ENCODE measurements at regions of chr13 and their contacts with region 1.

Region 1: GRCh38 chr13:99176309-99177276 is 24.1 kb upstream of the UBAC2 start:
- DNase-seq: no peak
- H3K4me3 ChIP-seq: no peak overlapping the region
- CTCF ChIP-seq: peak; percentile 88

Region 2: GRCh38 chr13:99151516-99151915 is 25.1 kb before region 1 on chr13:
- CTCF ChIA-PET with region 1: interaction called, 12 read pairs
- POLR2A ChIA-PET with region 1: no interaction called
- DNase-seq: no peak
- H3K4me3 ChIP-seq: no peak overlapping the region
- CTCF ChIP-seq: no peak

Region 3: GRCh38 chr13:99158846-99159245 is 17.7 kb before region 1 on chr13:
- CTCF ChIA-PET with region 1: interaction called, 19 read pairs
- POLR2A ChIA-PET with region 1: no interaction called
- DNase-seq: no peak
- H3K4me3 ChIP-seq: no peak overlapping the region
- CTCF ChIP-seq: no peak

Region 4: DNA sequence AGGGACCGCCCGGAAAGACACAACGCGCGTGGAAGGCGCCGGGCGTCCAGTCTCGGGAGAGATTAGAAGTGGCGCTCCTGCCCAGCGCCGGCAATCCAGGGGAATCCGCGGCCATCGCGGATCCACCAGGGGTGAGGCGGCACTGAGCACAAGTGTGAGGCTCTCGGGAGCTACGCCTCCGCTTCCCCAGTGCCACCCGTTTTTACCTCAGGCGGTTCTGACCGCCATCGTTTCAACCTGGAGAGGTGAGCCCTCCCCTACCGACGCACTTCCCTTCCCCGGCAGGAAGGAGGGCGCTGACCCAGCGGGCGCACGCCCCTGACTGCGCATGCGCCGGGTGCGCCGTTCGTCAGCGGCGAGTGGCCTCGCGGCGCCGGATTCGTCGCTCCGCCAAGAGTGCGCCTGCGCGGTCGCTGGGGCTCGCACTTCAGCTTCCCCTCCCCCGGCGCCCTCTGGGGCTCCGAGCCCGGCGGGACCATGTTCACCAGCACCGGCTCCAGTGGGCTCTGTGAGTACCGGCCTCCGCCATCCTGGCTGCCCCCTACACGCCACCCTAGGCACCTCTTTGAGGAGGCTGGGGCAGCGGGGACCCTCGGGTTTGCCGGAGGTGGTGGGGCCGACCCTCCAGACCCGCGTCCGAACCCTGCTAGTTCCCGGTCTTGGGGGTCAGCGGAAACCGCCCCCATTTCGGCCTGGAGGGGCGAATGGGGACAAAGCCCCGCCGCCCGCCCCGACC is 24.0 kb after region 1 on chr13 and contains the start of gene UBAC2:
- CTCF ChIA-PET with region 1: interaction called, 29 read pairs
- POLR2A ChIA-PET with region 1: no interaction called
- DNase-seq: peak; percentile 45
- H3K4me3 ChIP-seq: peak within 1 kb of the TSS; percentile 98
- CTCF ChIP-seq: no peak

Region 5: DNA sequence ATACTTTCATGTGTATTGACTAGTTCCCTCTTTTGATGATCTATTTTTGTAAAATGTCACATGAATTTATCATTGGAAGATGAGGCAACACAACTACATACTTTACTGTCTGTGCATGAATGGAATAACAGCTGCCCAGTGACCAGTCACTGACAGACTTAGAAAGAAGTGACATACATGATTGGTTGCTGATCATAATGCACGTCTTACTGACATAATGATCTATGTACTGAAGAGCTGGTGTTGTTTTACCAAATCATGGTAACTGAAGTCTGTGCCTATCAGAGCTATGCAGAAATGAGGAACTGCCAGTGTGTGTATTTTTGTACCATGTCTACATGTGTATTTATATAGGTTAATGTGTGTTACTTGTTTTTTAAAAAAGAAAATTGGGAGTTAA is 55.1 kb after region 1 on chr13:
- CTCF ChIA-PET with region 1: interaction called, 11 read pairs
- POLR2A ChIA-PET with region 1: no interaction called
- DNase-seq: no peak
- H3K4me3 ChIP-seq: no peak overlapping the region
- CTCF ChIP-seq: no peak

Region 6: DNA sequence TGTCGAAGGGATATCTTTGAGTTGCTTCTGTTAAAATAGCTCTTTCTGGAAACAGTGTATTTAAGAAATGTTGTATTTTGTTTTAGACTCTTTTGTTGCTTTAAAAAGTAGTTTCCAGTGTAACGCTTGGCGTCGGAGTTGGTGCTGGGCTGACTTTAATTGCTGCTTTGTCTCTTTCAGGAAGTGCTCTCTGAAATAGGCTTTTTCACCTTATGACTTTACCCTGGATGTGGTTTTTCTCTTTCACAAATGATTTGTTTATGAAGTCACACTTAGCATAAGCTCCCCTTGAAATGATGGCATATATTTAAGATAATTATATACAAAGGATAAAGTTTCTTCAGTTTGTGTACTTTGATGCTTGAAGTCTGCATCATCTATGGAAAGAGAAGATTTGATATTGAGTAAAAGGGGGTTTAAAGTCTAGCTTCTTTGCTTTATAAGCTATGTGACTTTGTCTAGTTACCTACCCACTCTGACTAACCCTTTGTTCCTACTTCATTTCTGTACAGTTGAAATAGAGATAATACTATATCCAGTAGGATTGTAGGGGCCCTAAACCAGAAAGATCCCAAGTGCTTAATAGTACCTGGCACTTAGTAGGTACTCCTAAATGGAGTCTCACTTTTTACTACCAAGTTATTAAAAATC is 81.7 kb after region 1 on chr13 and contains the start of gene GPR18:
- CTCF ChIA-PET with region 1: interaction called, 395 read pairs
- POLR2A ChIA-PET with region 1: no interaction called
- DNase-seq: no peak
- H3K4me3 ChIP-seq: no peak within 1 kb of the TSS
- CTCF ChIP-seq: no peak

Region 7: DNA sequence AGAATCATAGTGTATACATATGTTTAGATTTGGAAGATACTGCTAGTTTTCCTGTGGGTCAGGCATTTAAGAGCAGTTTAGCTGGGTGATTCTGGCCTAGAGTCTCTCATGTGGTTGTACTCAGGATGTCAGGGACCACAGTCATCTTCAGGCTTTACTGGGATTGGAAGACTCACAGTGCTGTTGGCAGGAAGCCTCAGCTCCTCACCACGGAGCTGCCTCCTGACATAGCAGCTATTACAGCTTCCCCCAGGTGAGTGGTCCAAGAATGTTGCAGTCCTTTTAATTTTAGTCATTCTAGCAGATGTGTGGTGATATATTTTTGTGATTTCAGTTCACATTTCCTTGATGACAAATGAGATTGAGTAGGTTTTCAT is 98.5 kb after region 1 on chr13:
- CTCF ChIA-PET with region 1: interaction called, 395 read pairs
- POLR2A ChIA-PET with region 1: no interaction called
- DNase-seq: peak; percentile 47
- H3K4me3 ChIP-seq: no peak overlapping the region
- CTCF ChIP-seq: no peak